Dendritic cell treated with granulocyte-macrophage colony-stimulating factor and Interleukin-4, amounts not matched to agents 40 ng/mL and 50 ng/mL, for 4 days (primary cell): ENCODE measurements at regions of chr16 and their contacts with region 1.

Region 1: DNA sequence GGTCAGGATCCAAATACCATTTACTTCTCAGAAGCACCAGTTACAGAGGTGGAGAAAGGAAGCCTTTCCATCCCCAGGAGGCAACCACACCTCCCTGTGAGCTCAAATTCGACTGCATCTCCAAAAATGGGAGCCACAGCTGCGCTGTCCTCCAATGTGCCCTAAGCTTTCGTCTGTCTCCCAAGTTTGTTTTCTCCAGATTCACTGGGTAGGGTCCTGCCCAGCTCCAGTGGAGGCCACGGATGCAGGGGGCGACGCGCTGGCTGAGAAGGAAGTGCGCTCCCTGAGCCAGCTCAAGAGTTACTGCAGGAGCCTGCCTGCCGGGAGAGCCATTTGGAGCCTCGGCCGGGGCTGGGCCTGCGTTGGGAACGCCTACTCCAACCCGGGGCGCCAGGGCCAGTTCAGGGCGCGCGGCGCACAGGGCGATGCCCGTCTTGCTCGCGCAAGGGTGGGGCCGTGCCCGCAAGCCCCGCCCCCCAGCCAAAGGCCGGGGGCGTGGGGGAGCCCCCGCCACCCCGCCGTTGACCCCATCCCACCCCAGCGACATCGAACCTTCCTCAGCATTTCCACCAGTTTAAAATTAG is 19.5 kb downstream of the SIAH1 start:
- H3K4me3 Mint-ChIP-seq: peak overlapping the region; percentile 85
- H3K27ac Mint-ChIP-seq: peak overlapping the region; percentile 94
- H3K4me1 Mint-ChIP-seq: peaks cover 79% of the 10 kb centered on the region
- H3K27me3 Mint-ChIP-seq: no peaks in the 10 kb centered on the region

Region 2: GRCh38 chr16:48117217-48118105 is 248.2 kb before region 1 on chr16:
- intact Hi-C with region 1: no loop called
- H3K4me3 Mint-ChIP-seq: no peak overlapping the region
- H3K27ac Mint-ChIP-seq: no peak overlapping the region
- H3K4me1 Mint-ChIP-seq: no peaks in the 10 kb centered on the region
- H3K27me3 Mint-ChIP-seq: no peaks in the 10 kb centered on the region

Region 3: DNA sequence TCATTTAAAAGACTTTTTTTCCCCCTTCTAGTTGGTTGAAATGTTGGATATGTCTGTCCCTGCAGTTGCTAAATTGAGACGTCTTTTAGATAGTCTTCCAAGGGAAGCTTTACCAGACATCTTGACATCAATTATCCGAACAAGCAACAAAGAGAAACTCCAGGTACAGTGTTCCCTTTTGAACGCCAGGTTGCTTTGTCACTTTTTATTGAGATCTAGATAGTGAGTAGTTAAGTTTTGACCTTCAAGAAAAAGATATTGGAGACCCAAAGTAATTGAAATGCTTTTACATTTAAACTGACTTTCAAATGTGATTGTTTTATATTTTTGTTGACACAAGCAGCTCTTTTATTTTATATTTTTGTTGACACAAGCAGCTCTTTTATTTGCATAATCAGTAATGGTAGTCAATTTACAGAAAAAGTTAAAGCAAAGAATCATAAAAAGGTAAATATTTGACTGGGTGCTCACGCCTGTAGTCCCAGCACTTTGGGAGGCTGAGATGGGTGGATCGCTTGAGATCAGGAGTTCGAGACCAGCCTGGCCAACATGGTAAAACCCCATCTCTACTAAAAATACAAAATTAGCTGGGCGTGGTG is 109.0 kb before region 1 on chr16:
- intact Hi-C with region 1: no loop called
- H3K4me3 Mint-ChIP-seq: no peak overlapping the region
- H3K27ac Mint-ChIP-seq: no peak overlapping the region
- H3K4me1 Mint-ChIP-seq: peaks cover 6% of the 10 kb centered on the region
- H3K27me3 Mint-ChIP-seq: no peaks in the 10 kb centered on the region

Region 4: DNA sequence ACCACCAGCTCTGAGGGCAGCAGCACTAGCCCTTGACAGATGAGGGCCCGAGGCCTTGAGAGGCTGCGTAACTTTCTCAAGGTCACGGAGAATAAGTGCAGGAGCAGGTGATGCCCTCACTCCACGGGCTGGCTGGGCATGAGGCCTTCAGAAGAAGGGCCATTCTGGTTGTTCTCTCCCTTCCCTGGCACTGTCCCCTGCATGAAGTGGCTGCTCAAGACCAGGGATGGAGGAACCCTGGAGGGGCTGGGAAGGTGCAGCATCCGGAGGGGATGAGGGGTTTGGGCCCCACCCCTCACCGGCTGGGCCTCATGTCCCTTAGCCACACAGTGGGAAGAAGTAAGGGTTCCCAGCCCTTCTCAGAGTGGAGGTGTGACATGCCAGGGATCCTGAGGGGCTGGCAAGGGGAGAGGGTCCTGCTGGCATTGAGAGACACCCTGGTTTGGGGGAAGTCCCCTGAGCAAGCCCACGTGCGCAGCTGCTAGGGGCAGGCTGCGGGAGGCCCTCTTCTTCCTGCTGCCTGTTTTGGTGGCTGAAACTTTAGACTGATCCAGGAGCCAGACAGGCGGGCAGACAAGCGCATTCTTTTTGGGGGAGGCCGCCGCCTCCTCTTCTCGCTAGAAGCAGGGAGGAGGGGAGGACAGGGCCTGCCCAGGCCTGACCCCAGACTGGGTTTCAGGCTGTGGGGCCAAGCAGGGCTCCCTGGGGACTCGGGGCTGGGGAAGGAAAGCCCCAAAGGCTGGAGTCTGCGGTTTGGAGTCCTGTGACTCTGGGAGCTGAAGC is 170.3 kb after region 1 on chr16:
- intact Hi-C with region 1: loop called (anchors 5 kb)
- H3K4me3 Mint-ChIP-seq: peak overlapping the region; percentile 39
- H3K27ac Mint-ChIP-seq: peak overlapping the region; percentile 96
- H3K4me1 Mint-ChIP-seq: peaks cover 76% of the 10 kb centered on the region
- H3K27me3 Mint-ChIP-seq: no peaks in the 10 kb centered on the region